ENCODE measurements at regions of chr2 and their contacts with region 1.

Region 1: DNA sequence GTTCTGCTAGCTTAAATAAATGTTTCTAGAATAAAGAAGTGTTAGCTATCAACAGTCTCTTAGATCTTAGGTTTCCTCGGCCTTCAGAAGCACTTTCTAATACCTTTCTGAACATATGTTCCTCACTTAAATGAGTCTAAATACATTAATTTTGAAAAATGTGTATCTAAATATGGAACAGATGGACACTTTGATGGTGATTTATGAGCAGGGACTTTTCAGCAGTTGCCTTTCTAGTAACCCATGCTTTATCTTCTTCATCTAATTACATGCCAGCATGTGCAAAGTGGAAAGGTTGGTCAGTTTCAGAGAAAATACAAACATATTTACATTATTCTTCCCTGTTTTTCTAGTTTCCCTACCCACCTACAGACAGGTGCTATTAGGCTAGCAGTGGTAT is 797.0 kb upstream of the CHAC2 start:
- DNase-seq: no peak
- ATAC-seq: no peak
- H3K4me3 ChIP-seq: no peak overlapping the region
- H3K4me3 Mint-ChIP-seq: no peak overlapping the region
- H3K27ac ChIP-seq: no peak overlapping the region
- H3K27ac Mint-ChIP-seq: no peak overlapping the region
- H3K4me1 ChIP-seq: no peaks in the 10 kb centered on the region
- H3K4me1 Mint-ChIP-seq: no peaks in the 10 kb centered on the region
- H3K27me3 ChIP-seq: no peaks in the 10 kb centered on the region
- H3K27me3 Mint-ChIP-seq: no peaks in the 10 kb centered on the region

Region 2: GRCh38 chr2:53331667-53332066 is 361.0 kb after region 1 on chr2:
- CTCF ChIA-PET with region 1: no interaction called
- POLR2A ChIA-PET with region 1: interaction called in 1 of 2 experiments, 13 read pairs
- DNase-seq: no peak
- ATAC-seq: no peak
- H3K4me3 ChIP-seq: no peak overlapping the region
- H3K4me3 Mint-ChIP-seq: no peak overlapping the region
- H3K27ac ChIP-seq: no peak overlapping the region
- H3K27ac Mint-ChIP-seq: no peak overlapping the region
- H3K4me1 ChIP-seq: no peaks in the 10 kb centered on the region
- H3K4me1 Mint-ChIP-seq: no peaks in the 10 kb centered on the region
- H3K27me3 ChIP-seq: no peaks in the 10 kb centered on the region
- H3K27me3 Mint-ChIP-seq: peaks cover 0 to 2% of the 10 kb centered on the region in 2 donors